ENCODE measurements at regions of chr20 and their contacts with region 1.

Region 1: DNA sequence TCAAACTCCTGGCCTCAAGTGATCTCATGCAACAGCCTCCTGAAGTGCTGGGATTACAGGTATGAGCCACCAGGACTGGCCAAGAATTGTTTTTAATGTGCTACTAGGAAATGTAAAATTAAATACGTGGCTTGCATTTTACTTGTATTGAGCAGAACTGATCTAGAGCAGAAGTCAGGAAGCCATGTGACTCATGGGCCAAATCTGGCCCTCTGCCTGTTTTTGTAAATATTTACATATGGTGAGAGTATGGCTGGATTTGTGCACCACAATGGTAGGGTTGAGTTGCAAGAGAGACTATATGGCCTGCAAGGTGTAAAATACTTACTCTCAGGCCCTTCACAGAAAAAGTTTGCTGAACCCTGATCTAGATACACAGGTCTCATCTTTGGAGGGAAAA is 75.8 kb downstream of the LAMP5 start:
- DNase-seq: no peak
- ATAC-seq: no peak
- H3K4me3 ChIP-seq: no peak overlapping the region
- H3K27ac ChIP-seq: no peak overlapping the region
- H3K4me1 ChIP-seq: no peaks in the 10 kb centered on the region
- H3K27me3 ChIP-seq: peaks cover 0 to 8% (median 0%) of the 10 kb centered on the region in 9 donors
- CTCF ChIP-seq: no peak
- POLR2A ChIP-seq: no peak

Region 2: DNA sequence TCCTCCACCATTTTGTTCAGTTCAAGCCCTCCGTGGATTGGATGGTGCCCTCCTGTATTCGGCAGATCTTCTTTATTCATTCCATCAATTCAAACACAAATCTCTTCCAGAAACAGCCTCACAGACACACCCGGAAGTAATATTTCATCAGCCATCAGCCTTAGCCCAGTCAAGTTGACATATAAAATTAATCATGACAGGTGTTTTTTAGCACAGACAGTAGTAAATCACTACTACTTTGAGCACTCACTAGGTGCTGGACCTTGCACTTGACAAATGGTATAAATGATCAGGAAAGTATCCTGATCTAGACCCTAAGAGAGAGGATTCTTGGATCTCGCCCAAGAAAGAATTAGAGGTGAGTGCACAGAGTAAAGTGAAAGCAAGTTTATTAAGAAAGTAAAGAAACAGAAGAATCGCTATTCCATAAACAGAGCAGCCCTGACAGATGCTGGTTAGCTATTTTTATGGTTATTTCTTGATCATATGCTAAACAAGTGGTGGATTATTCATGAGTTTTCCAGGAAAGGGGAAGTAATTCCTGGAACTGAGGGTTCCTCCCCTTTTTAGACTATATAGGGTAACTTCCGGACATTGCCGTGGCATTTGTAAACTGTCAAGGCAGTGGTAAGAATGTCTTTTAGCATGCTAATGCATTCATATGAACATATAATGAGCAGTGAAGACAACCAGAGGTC is 270.4 kb before region 1 on chr20:
- intact Hi-C with region 1: no loop called
- DNase-seq: no peak
- ATAC-seq: peak in 1 of 4 donors; percentile 6
- H3K4me3 ChIP-seq: peak overlapping the region in 6 of 12 donors; percentile 2 to 17 (median 9)
- H3K27ac ChIP-seq: peak overlapping the region in 1 of 12 donors; percentile 38
- H3K4me1 ChIP-seq: peaks cover 0 to 23% (median 11%) of the 10 kb centered on the region in 12 donors
- H3K27me3 ChIP-seq: no peaks in the 10 kb centered on the region
- CTCF ChIP-seq: no peak
- POLR2A ChIP-seq: no peak

Region 3: DNA sequence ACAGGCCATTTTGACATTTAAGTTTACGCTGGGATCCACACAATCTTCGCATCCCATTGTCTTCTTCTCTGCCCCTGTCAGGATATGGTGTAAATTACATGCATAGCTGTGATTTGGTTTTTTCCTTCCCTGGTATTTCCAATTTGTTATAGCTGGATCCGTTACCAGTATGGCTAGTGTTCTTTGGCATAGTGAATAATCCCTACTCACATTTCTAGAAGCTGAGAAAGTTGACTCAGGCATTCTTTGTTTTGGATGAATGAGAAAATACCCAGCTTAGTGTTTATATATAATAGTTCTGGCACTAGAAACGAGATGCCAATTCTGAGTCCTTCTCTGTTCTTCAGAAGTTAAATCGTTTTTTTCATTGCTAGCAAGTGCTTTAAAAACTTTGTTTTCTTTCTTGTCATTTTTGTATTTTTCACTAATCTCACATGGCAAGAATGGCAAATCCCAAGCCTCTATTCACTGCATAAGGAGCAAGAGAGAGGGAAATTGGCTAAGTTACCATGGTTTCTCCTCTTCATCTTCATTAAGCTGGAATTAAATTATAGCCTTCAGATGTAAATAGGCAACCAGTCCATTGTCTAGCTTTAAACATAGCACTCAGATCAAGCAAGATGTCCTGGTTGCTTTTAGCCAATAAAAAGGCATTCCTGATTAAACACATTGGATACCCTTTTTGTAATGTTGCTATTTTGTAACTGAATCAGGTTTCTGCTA is 167.7 kb before region 1 on chr20:
- intact Hi-C with region 1: loop called in 1 of 10 experiments (anchors 5 kb)
- DNase-seq: no peak
- ATAC-seq: no peak
- H3K4me3 ChIP-seq: no peak overlapping the region
- H3K27ac ChIP-seq: no peak overlapping the region
- H3K4me1 ChIP-seq: peaks cover 0 to 9% (median 3%) of the 10 kb centered on the region in 12 donors
- H3K27me3 ChIP-seq: no peaks in the 10 kb centered on the region
- CTCF ChIP-seq: no peak
- POLR2A ChIP-seq: no peak

Region 4: DNA sequence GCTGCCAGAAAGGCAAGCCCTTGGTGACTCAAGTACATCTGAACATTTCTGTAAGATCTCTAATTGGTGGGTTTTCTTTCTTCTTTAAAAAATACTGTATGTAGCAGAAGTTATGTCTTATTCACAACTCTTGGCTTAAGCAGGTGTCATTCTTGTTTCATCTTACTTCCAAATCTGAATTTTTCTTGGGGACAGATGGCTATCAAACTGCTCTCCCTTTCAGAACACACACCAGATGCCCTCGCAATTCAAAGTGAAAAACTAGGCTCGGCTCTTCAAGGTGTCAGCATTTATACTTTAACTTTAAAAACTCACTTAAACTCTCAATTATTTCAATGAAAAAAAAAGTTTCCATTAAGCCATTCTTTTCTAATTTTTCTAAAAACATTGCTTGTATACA is 198.9 kb after region 1 on chr20:
- intact Hi-C with region 1: no loop called
- DNase-seq: no peak
- ATAC-seq: no peak
- H3K4me3 ChIP-seq: no peak overlapping the region
- H3K27ac ChIP-seq: no peak overlapping the region
- H3K4me1 ChIP-seq: no peaks in the 10 kb centered on the region
- H3K27me3 ChIP-seq: peaks cover 0 to 6% (median 0%) of the 10 kb centered on the region in 9 donors
- CTCF ChIP-seq: no peak
- POLR2A ChIP-seq: no peak